ENCODE measurements at regions of chr19 and their contacts with region 1.

Region 1: DNA sequence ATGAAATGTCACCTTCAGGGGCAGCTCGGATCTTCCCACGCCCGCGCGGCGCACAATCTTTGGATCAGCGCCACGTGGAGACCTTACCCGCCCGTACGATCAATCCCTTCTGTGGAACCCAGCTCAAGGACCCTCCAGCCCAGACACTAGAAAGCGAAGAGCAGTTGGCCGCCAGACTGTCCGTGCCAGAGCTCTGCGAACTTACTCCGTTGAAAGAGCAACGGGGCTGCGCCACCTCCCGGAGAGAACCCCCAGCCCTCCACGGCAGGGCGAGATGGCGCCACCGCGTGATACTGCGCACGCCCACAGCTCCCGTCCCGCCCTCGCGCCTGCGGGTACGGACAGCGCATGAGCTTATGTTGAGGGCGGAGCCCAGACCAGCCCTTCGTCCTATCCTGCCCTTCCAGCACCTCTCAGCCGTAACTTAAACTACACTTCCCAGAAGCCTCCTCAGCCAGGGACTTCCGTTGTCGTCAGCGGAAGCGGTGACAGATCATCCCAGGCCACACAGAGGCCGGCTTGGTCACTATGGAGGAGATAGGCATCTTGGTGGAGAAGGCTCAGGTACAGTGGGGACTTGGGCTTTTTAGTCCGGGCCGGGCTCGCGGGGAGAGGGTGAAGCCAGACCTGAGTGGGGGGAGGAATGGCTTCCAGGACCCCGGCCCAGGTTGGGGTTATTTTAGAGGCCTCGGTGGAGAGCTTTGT is at the start of gene PSMC4:
- DNase-seq: peak; percentile 99
- ATAC-seq: peak; percentile 97
- H3K4me3 ChIP-seq: peak within 1 kb of the TSS; percentile 76 to 96 (median 89)
- H3K4me3 Mint-ChIP-seq: peak within 1 kb of the TSS; percentile 92
- H3K27ac ChIP-seq: peak within 1 kb of the TSS; percentile 87 to 95
- H3K27ac Mint-ChIP-seq: peak within 1 kb of the TSS; percentile 94
- H3K4me1 ChIP-seq: peaks cover 23 to 25% of the 10 kb centered on the region in 2 donors
- H3K4me1 Mint-ChIP-seq: peaks cover 48% of the 10 kb centered on the region
- H3K27me3 ChIP-seq: no peaks in the 10 kb centered on the region
- H3K27me3 Mint-ChIP-seq: no peaks in the 10 kb centered on the region
- CTCF ChIP-seq: peak; percentile 83
- total RNA-seq, gene PSMC4: 56.6 and 58.2 TPM in 2 replicates

Region 2: DNA sequence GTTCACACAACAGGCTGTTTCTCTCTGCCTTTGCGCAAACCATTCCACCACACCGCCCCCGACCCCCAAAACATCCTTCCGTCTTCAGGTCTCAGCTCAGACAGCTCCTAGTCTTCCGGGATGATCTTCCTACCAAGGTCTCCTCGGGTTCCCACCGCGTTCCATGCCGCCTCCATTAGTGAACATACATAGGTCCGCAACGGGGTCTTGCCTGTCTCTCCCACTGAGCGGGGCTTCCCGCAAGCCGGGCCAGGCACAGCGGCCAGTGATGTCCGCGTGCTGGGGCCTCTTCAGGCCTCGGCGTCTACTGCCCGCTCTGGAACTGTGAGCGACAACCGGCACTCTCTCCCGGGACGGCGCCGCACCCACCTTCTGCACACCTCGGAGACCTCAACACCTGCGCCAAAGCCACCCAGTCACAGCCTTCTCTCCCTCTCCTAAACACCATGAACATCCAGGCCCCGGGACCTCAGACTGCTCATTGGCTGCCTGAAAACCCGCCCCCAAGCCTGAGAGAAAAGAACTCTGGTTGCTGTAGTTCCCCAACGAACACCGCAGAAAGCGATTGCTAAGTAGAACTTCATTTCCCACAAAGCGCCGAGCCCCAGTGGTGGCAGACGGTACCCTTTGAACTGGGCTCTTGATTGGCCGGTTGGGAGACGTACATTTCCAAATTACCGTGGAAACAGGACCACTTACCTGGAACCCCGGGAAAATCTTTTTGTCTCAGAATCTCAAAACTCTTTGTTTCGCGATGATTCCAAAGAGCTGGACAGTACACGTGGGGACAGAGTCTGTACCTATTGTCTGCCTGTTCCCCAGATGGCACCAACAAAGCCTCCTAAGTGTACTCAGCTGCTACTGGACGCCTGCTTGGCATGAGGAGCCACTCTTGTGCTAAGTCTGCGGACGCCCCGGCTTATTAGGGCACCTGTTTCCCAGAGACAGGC is 146.4 kb before region 1 on chr19:
- CTCF ChIA-PET with region 1: no interaction called
- POLR2A ChIA-PET with region 1: no interaction called
- intact Hi-C with region 1: loop called (anchors 1 kb)
- DNase-seq: peak; percentile 92
- ATAC-seq: peak; percentile 98
- H3K4me3 ChIP-seq: peak overlapping the region; percentile 66 to 85 (median 79)
- H3K4me3 Mint-ChIP-seq: no peak overlapping the region
- H3K27ac ChIP-seq: peak overlapping the region; percentile 38 to 55
- H3K27ac Mint-ChIP-seq: no peak overlapping the region
- H3K4me1 ChIP-seq: peaks cover 18 to 30% of the 10 kb centered on the region in 2 donors
- H3K4me1 Mint-ChIP-seq: peaks cover 13% of the 10 kb centered on the region
- H3K27me3 ChIP-seq: no peaks in the 10 kb centered on the region
- H3K27me3 Mint-ChIP-seq: no peaks in the 10 kb centered on the region
- CTCF ChIP-seq: no peak

Region 3: GRCh38 chr19:39878398-39878797 is 92.4 kb before region 1 on chr19:
- CTCF ChIA-PET with region 1: interaction called, 20 read pairs
- POLR2A ChIA-PET with region 1: no interaction called
- intact Hi-C with region 1: loop called (anchors 5 kb)
- DNase-seq: no peak
- ATAC-seq: no peak
- H3K4me3 ChIP-seq: no peak overlapping the region
- H3K4me3 Mint-ChIP-seq: no peak overlapping the region
- H3K27ac ChIP-seq: no peak overlapping the region
- H3K27ac Mint-ChIP-seq: no peak overlapping the region
- H3K4me1 ChIP-seq: no peaks in the 10 kb centered on the region
- H3K4me1 Mint-ChIP-seq: peaks cover 5% of the 10 kb centered on the region
- H3K27me3 ChIP-seq: no peaks in the 10 kb centered on the region
- H3K27me3 Mint-ChIP-seq: no peaks in the 10 kb centered on the region
- CTCF ChIP-seq: no peak

Region 4: GRCh38 chr19:39941615-39942365 is 29.0 kb before region 1 on chr19:
- CTCF ChIA-PET with region 1: interaction called, 77 read pairs
- POLR2A ChIA-PET with region 1: interaction called, 13 read pairs
- intact Hi-C with region 1: loop called (anchors 1 kb)
- DNase-seq: peak; percentile 89
- ATAC-seq: peak; percentile 91
- H3K4me3 ChIP-seq: peak overlapping the region; percentile 27 to 53 (median 41)
- H3K4me3 Mint-ChIP-seq: peak overlapping the region; percentile 60
- H3K27ac ChIP-seq: peak overlapping the region; percentile 57 to 78
- H3K27ac Mint-ChIP-seq: peak overlapping the region; percentile 29
- H3K4me1 ChIP-seq: peaks cover 62 to 64% of the 10 kb centered on the region in 2 donors
- H3K4me1 Mint-ChIP-seq: peaks cover 63% of the 10 kb centered on the region
- H3K27me3 ChIP-seq: no peaks in the 10 kb centered on the region
- H3K27me3 Mint-ChIP-seq: no peaks in the 10 kb centered on the region
- CTCF ChIP-seq: no peak

Region 5: GRCh38 chr19:40090241-40091204 is 119.7 kb after region 1 on chr19 and contains the start of gene ZNF780A:
- CTCF ChIA-PET with region 1: no interaction called
- POLR2A ChIA-PET with region 1: no interaction called
- intact Hi-C with region 1: loop called (anchors 1 kb)
- DNase-seq: peak; percentile 75
- ATAC-seq: peak; percentile 88
- H3K4me3 ChIP-seq: peak within 1 kb of the TSS; percentile 85 to 94 (median 88)
- H3K4me3 Mint-ChIP-seq: peak within 1 kb of the TSS; percentile 99
- H3K27ac ChIP-seq: peak within 1 kb of the TSS; percentile 79 to 86
- H3K27ac Mint-ChIP-seq: peak within 1 kb of the TSS; percentile 99
- H3K4me1 ChIP-seq: peaks cover 12 to 16% of the 10 kb centered on the region in 2 donors
- H3K4me1 Mint-ChIP-seq: peaks cover 37% of the 10 kb centered on the region
- H3K27me3 ChIP-seq: peaks cover 0 to 7% (median 4%) of the 10 kb centered on the region in 4 experiments
- H3K27me3 Mint-ChIP-seq: peaks cover 21% of the 10 kb centered on the region
- CTCF ChIP-seq: no peak
- total RNA-seq, gene ZNF780A: 32.3 and 32.8 TPM in 2 replicates